Activated CD8-positive, alpha-beta T cell treated with anti-CD3 and anti-CD28 coated beads, Interleukin-2, amount 10 ng/mL, durations not matched to agents 7 days and 5 days (primary cell): ENCODE measurements at regions of chr9 and their contacts with region 1.

Region 1: DNA sequence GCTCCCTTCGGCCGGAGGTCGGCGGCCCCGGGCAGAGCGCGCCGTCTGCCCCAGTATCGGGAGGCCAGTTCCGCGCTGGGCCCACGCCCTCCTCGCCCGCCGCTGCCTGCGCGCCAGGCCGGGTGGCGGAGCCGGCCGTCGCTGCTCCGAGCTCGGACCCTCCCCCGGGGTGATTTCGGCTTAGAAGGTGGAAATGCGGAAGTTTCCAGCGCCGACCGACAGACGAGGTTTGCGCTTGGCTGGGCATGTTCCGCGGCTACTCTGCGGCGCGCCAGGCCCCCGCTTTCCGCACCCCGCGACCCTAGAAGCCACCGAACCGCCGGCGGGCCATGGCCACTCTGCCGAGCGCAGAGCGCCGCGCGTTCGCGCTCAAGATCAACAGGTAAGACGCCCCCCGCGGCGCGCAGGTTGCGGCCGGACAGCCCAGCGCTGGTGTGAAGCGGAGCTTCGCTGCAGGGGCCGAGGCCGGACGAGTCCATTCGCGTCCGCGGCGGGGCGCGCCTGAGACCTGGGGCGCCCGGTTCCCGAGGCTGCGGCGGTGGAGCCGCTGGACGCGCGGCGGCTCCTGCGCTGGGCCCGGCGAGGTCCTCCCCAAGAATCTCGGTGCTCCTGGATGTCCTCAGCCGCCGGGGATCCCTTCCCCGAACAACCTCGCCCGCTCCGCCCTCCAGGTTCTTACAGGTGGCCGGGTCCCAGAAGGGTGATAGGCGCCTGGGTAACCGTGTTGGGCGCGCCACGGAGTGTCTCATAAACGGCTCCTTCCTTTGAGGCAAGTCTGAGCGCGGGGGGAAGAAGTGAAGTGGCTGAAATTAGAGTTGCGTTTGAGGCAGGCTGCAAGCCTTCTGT is at the start of gene DOCK8:
- DNase-seq: peak; percentile 77
- ATAC-seq: peak; percentile 90
- H3K4me3 Mint-ChIP-seq: peak within 1 kb of the TSS; percentile 88
- H3K27ac Mint-ChIP-seq: peak within 1 kb of the TSS; percentile 89
- H3K4me1 Mint-ChIP-seq: peaks cover 35% of the 10 kb centered on the region
- H3K27me3 Mint-ChIP-seq: no peaks in the 10 kb centered on the region
- total RNA-seq, gene DOCK8: 386 to 389 TPM

Region 2: DNA sequence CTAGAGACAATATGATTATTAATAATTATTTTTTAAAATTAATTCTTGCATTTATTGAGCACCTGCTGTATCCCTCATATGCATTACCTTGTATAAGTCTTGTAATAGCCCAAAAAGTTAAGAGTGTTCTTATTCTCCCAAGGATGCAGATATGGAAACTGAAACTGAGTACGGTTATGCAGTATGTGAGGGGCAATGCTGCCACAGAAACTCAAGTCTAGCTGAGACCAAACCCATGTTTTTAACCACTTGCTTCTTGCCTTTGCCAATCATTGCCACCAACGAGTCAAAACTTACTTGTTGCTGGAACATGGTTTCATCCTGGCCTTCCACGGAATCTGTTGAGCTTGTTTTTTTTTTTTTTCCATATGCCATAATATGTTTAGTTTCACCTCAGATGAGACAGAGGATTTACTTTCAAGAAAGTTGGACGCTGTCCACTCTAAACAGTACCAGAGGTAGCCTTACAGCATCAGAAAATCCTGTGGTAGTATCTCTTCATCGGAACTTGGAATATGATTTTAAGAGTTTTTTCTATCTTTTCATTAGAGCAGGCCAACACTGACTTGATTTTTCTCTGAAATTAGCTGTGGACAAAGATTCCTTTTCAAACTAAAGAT is 27.7 kb after region 1 on chr9:
- CTCF ChIA-PET with region 1: interaction called, 10 read pairs
- POLR2A ChIA-PET with region 1: interaction called, 9 read pairs
- DNase-seq: peak; percentile 48
- ATAC-seq: peak; percentile 82
- H3K4me3 Mint-ChIP-seq: peak overlapping the region; percentile 52
- H3K27ac Mint-ChIP-seq: peak overlapping the region; percentile 82
- H3K4me1 Mint-ChIP-seq: peaks cover 68% of the 10 kb centered on the region
- H3K27me3 Mint-ChIP-seq: no peaks in the 10 kb centered on the region

Region 3: DNA sequence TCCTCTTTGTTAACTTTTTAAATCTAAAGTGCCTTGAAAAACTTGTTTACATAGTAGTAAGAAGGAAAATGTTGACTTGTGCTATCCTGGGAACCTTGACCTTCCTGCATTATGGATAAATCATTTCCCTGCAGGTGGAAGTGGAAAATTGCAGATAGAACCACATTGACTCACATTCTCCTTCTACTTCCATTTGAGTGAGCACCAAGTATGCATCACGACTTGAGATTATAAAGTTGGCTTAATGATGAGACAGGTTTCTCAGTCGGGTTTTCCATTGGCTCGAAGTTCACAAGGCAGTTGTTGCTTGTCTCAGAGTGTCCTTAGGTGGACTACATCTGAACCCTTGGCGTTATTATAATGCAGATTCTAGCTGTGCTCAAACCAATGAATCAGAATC is 39.6 kb after region 1 on chr9:
- CTCF ChIA-PET with region 1: no interaction called
- POLR2A ChIA-PET with region 1: no interaction called
- DNase-seq: no peak
- ATAC-seq: no peak
- H3K4me3 Mint-ChIP-seq: no peak overlapping the region
- H3K27ac Mint-ChIP-seq: no peak overlapping the region
- H3K4me1 Mint-ChIP-seq: peaks cover 42% of the 10 kb centered on the region
- H3K27me3 Mint-ChIP-seq: no peaks in the 10 kb centered on the region

Region 4: DNA sequence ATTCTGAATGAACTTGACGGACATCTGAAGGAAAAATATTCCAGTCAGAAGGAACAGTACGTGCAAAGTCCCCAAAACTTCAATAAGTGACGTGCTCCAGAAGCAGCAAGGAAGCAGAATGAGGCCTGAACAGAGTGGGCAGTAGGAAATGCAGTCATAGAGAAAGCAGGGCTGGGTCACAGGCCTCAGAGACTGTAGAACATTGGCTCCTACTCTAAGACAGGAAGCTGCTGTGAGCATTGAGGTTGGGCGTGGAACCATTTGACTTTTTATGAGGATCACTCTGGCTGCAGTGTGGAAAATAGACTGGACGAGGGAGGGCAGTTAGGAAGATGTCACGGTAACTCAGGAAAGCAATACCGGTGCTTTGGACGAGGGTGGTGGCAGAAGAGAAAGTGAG is 63.8 kb after region 1 on chr9:
- CTCF ChIA-PET with region 1: interaction called, 19 read pairs
- POLR2A ChIA-PET with region 1: interaction called, 122 read pairs
- DNase-seq: peak; percentile 78
- ATAC-seq: peak; percentile 67
- H3K4me3 Mint-ChIP-seq: no peak overlapping the region
- H3K27ac Mint-ChIP-seq: no peak overlapping the region
- H3K4me1 Mint-ChIP-seq: peaks cover 37% of the 10 kb centered on the region
- H3K27me3 Mint-ChIP-seq: no peaks in the 10 kb centered on the region